CD8-positive, alpha-beta T cell (primary cell): ENCODE measurements at regions of chr7 and their contacts with region 1.

Region 1: DNA sequence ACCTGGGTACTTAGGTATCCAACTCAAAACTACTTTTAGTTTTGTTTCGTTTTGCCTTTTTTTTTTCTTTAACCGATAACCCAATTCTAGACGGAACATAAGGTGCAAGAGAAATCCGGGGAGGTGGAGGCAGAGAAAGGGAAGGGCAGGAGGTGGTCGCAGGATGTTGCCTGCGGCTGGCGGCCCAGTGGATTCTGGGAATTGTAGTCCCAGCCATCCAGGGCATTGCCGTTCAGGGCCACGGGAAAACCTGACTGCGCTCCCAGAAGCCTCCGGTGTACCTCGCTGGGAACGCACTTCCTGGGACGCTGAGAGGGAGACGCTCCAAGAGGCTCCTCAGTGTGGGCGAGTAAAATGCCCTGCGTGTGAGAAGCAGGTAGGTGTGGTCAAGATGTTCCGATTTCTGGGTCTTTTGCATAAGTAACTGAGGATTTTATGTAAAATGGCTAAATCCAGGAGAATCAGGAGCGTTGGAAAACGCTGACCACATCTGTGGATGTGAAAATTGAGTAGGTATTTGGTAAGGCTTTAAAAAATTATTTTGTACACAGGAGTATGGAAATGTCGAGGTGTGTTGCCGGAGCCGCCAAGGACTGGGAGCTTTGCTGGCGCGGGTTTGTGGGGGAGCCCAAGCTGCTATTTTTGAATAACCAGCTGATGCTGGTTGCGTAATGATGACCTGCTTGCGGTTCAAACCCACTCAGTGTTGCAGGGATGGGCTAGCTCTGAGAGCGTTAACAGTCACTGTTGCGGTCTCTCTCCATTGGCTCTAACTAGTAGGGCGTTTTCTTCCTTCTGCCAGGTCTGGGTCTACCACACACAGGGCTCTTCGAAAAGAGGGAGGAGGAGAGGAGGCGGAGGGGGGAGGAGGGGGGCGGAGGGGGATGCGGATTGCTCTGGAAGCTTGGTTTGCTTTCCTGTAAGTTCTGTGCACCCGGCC is at the start of gene CLDN12:
- DNase-seq: peak; percentile 44 to 94 (median 71)
- ATAC-seq: peak; percentile 98
- H3K4me3 ChIP-seq: peak within 1 kb of the TSS; percentile 64 to 84
- H3K4me3 Mint-ChIP-seq: peak within 1 kb of the TSS; percentile 96
- H3K27ac ChIP-seq: peak within 1 kb of the TSS; percentile 50 to 66
- H3K27ac Mint-ChIP-seq: peak within 1 kb of the TSS; percentile 93
- H3K4me1 ChIP-seq: peaks cover 11% of the 10 kb centered on the region
- H3K4me1 Mint-ChIP-seq: peaks cover 18% of the 10 kb centered on the region
- H3K27me3 ChIP-seq: no peaks in the 10 kb centered on the region
- H3K27me3 Mint-ChIP-seq: no peaks in the 10 kb centered on the region
- CTCF ChIP-seq: no peak
- total RNA-seq, gene CLDN12: 1.8 to 1.9 TPM

Region 2: DNA sequence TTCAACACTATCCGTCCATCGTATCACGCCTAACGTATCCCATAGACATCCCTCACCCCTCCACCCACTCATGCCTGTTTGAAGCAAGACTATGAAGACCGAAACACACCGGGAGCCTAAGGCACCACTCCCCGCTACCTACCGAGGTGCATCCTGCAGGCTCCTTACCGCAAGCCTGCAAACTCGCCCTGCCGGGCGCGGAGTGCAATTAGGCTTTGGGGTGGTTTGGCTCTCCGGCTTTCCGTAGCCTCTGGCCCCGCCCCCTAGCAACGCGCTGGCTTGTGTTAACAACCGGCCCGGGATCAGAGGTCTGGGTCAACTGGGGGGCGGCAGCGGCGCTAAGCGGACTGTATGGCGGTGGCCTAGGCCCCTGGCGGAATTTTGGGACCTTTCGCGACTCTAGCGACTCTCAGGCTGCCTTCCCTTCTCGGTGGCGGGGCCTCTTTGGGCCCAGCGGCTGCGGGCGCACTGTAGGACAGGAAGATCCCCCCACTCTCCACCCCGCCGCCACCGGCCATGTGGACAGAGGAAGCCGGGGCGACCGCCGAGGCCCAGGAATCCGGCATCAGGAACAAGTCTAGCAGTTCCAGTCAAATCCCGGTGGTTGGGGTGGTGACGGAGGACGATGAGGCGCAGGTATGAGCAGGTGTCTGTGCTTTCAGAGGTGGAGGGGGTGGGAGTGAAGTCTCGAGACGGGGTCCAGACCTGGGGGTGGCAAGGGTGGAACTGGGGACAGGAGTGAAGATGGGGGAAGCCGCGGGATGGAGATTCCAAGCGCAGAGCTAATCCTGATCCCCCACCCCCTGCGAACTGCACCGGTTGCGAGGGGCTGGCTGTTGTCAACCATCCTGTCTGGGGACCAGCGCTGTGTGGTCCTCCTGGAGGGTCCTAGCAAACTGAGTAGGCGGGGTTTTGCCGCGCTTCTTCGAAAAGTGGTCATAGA is 158.3 kb before region 1 on chr7 and contains the start of gene CFAP69:
- CTCF ChIA-PET with region 1: no interaction called
- POLR2A ChIA-PET with region 1: no interaction called
- intact Hi-C with region 1: loop called (anchors 5 kb)
- DNase-seq: peak; percentile 71 to 90 (median 84)
- ATAC-seq: peak; percentile 86
- H3K4me3 ChIP-seq: peak within 1 kb of the TSS; percentile 78 to 83
- H3K4me3 Mint-ChIP-seq: peak within 1 kb of the TSS; percentile 92
- H3K27ac ChIP-seq: peak within 1 kb of the TSS in 1 of 2 experiments; percentile 54
- H3K27ac Mint-ChIP-seq: no peak within 1 kb of the TSS
- H3K4me1 ChIP-seq: peaks cover 3% of the 10 kb centered on the region
- H3K4me1 Mint-ChIP-seq: peaks cover 22% of the 10 kb centered on the region
- H3K27me3 ChIP-seq: peaks cover 0 to 9% of the 10 kb centered on the region in 2 experiments
- H3K27me3 Mint-ChIP-seq: peaks cover 54% of the 10 kb centered on the region
- CTCF ChIP-seq: peak; percentile 19
- total RNA-seq, gene CFAP69: not detected